ENCODE measurements at regions of chr10 and their contacts with region 1.

Region 1: GRCh38 chr10:73379064-73379748 is 20.5 kb upstream of the CFAP70 start:
- DNase-seq: no peak
- ATAC-seq: no peak
- H3K4me3 ChIP-seq: no peak overlapping the region
- H3K4me3 Mint-ChIP-seq: no peak overlapping the region
- H3K27ac ChIP-seq: no peak overlapping the region
- H3K27ac Mint-ChIP-seq: peak overlapping the region; percentile 17 to 52
- H3K4me1 ChIP-seq: no peaks in the 10 kb centered on the region
- H3K4me1 Mint-ChIP-seq: peaks cover 0 to 5% (median 0%) of the 10 kb centered on the region in 3 donors
- H3K27me3 ChIP-seq: no peaks in the 10 kb centered on the region
- H3K27me3 Mint-ChIP-seq: no peaks in the 10 kb centered on the region

Region 2: GRCh38 chr10:73398013-73398412 is 18.8 kb after region 1 on chr10:
- CTCF ChIA-PET with region 1: interaction called in 1 of 2 experiments, 13 read pairs
- POLR2A ChIA-PET with region 1: no interaction called
- DNase-seq: no peak
- ATAC-seq: no peak
- H3K4me3 ChIP-seq: no peak overlapping the region
- H3K4me3 Mint-ChIP-seq: no peak overlapping the region
- H3K27ac ChIP-seq: no peak overlapping the region
- H3K27ac Mint-ChIP-seq: no peak overlapping the region
- H3K4me1 ChIP-seq: no peaks in the 10 kb centered on the region
- H3K4me1 Mint-ChIP-seq: peaks cover 3 to 18% (median 13%) of the 10 kb centered on the region in 3 donors
- H3K27me3 ChIP-seq: no peaks in the 10 kb centered on the region
- H3K27me3 Mint-ChIP-seq: no peaks in the 10 kb centered on the region